Common myeloid progenitor, CD34-positive (primary cell): ENCODE measurements at regions of chr15 and their contacts with region 1.

Region 1: DNA sequence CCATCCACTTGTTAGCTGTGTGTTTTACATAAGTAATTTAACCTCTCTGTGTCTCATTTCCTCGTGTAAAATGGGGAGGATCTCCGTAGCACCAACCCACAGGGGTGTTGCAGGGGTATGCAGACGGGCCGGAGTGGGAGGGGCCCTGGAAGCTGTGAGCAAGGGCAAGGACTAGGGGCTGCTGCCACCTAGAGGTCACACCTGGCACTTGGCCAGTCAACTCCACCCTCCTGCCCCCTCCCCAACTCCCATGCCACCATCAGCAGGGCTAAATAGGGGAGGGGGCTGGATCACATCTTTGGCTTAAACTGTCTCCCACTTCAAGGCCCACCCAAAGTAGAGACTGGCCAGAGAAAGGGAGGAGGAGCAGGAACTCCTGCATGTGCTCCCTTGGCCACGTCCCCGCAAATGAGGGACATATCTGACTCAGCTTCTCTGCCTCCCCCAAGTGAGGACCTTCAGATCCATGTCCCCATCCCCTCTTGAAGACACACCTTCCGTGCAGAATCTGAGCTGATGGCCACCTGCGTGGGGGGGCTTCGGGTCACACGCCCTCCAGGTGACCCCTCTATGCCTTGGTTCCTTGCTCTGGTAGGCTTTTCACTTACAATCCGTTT is 2.6 kb downstream of the CCDC9B start:
- DNase-seq: peak; percentile 86 to 92 (median 92)
- H3K4me3 ChIP-seq: peak overlapping the region in 1 of 7 experiments; percentile 42
- H3K27ac ChIP-seq: no peak overlapping the region
- H3K4me1 ChIP-seq: peaks cover 5 to 71% (median 59%) of the 10 kb centered on the region in 4 experiments
- H3K27me3 ChIP-seq: no peaks in the 10 kb centered on the region

Region 2: GRCh38 chr15:39961051-39961450 is 377.1 kb before region 1 on chr15:
- CTCF ChIA-PET with region 1: no interaction called
- POLR2A ChIA-PET with region 1: no interaction called
- DNase-seq: no peak
- H3K4me3 ChIP-seq: no peak overlapping the region
- H3K27ac ChIP-seq: no peak overlapping the region
- H3K4me1 ChIP-seq: peaks cover 0 to 4% (median 1%) of the 10 kb centered on the region in 4 experiments
- H3K27me3 ChIP-seq: no peaks in the 10 kb centered on the region

Region 3: DNA sequence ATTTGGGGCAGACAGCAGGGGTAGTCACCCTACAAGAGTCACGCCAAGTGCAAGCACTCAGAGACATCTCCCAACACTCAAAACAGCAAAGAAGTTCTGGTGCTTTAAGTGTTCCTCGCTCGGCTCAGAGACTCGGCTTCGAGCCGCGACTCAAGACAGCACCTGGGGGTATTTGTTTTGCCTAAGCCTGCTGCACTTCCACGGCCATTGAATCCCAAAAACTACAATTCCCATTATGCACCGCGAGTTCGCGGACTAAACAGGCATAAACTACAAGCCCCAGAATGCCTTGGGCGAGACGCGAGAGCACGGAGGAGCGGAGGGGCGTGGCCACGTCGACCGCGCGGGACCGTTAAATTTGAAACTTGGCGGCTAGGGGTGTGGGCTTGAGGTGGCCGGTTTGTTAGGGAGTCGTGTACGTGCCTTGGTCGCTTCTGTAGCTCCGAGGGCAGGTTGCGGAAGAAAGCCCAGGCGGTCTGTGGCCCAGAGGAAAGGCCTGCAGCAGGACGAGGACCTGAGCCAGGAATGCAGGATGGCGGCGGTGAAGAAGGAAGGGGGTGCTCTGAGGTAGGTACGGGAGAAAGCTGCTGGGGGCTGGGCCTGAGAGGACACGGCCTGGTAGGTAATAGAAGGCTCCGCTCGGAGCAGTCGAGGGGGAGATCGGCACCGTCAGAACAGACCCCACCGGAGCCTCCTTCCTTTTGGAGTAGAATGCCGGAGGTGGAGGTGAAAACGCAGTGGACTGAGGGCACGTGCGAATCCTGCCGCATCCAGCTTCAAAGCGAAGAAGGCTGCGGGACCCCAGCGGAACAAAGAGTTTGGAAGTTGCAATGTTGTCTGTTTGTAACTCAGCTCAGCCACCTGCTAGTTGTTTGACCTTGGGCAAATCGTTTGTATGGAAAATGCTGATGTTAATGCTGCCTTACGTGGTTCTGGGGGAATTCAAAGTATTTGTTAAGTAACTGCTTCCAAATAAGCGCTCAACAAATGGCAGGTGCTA is 177.2 kb before region 1 on chr15 and contains the start of gene BUB1B:
- CTCF ChIA-PET with region 1: no interaction called
- POLR2A ChIA-PET with region 1: no interaction called
- DNase-seq: peak; percentile 91 to 96 (median 96)
- H3K4me3 ChIP-seq: peak within 1 kb of the TSS; percentile 93 to 99 (median 97)
- H3K27ac ChIP-seq: peak within 1 kb of the TSS in 1 of 2 experiments; percentile 62
- H3K4me1 ChIP-seq: peaks cover 8 to 27% (median 20%) of the 10 kb centered on the region in 4 experiments
- H3K27me3 ChIP-seq: no peaks in the 10 kb centered on the region

Region 4: GRCh38 chr15:40282144-40282868 is 55.8 kb before region 1 on chr15:
- CTCF ChIA-PET with region 1: interaction called, 236 read pairs
- POLR2A ChIA-PET with region 1: interaction called, 4 read pairs
- DNase-seq: peak; percentile 56 to 80 (median 72)
- H3K4me3 ChIP-seq: peak overlapping the region; percentile 20 to 78 (median 67)
- H3K27ac ChIP-seq: no peak overlapping the region
- H3K4me1 ChIP-seq: peaks cover 0 to 54% (median 38%) of the 10 kb centered on the region in 4 experiments
- H3K27me3 ChIP-seq: peaks cover 0 to 41% (median 0%) of the 10 kb centered on the region in 5 experiments

Region 5: GRCh38 chr15:40290918-40291574 is 47.1 kb before region 1 on chr15:
- CTCF ChIA-PET with region 1: interaction called, 58 read pairs
- POLR2A ChIA-PET with region 1: no interaction called
- DNase-seq: no peak
- H3K4me3 ChIP-seq: no peak overlapping the region
- H3K27ac ChIP-seq: no peak overlapping the region
- H3K4me1 ChIP-seq: peaks cover 0 to 18% (median 0%) of the 10 kb centered on the region in 4 experiments
- H3K27me3 ChIP-seq: no peaks in the 10 kb centered on the region

Region 6: DNA sequence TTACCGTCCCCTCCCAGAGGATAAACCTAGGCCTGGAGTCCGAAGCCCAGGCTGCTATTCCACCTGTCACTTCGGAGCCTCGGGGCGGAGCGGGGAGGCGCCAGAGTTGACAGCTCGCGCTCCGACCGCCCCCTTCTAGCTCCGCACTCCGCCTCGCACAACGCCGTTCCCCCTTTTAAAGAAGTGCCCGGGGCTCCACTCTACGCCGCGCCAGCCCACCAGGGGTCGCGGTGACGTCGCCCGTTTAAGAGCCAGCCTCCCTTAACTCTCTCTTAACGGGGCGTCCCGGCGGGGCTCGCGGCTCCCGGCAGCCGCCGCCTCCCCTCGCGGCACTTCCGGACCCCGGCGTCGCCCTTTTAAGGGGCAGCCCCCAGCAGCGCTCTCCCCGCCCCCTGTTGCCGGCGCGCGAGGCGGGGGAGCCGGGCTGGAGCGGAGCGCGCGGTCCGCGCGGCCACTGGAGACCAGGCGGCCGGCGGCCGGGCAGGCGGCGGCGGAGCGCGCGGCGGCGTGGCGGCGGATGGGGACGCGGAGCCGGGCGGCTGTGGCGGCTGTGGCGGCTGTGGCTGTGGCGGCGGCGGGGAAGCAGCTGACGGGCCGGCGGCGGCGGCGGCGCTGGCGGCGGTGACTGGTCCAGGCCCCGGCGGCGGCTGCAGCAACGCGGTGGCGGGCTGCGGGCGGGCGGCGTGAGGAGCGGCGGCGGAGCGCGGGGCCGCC is 14.8 kb before region 1 on chr15 and contains the start of gene INAFM2:
- CTCF ChIA-PET with region 1: interaction called, 1,099 read pairs
- POLR2A ChIA-PET with region 1: interaction called, 33 read pairs
- DNase-seq: peak; percentile 96 to 98 (median 98)
- H3K4me3 ChIP-seq: peak within 1 kb of the TSS; percentile 41 to 84 (median 81)
- H3K27ac ChIP-seq: peak within 1 kb of the TSS in 1 of 2 experiments; percentile 59
- H3K4me1 ChIP-seq: peaks cover 32 to 64% (median 59%) of the 10 kb centered on the region in 4 experiments
- H3K27me3 ChIP-seq: no peaks in the 10 kb centered on the region

Region 7: GRCh38 chr15:40357723-40358470 is 19.7 kb after region 1 on chr15 and contains the start of gene DISP2:
- CTCF ChIA-PET with region 1: interaction called, 139 read pairs
- POLR2A ChIA-PET with region 1: no interaction called
- DNase-seq: peak; percentile 66 to 81 (median 80)
- H3K4me3 ChIP-seq: peak within 1 kb of the TSS; percentile 23 to 78 (median 62)
- H3K27ac ChIP-seq: no peak within 1 kb of the TSS
- H3K4me1 ChIP-seq: peaks cover 0 to 22% (median 17%) of the 10 kb centered on the region in 4 experiments
- H3K27me3 ChIP-seq: peaks cover 0 to 2% (median 0%) of the 10 kb centered on the region in 5 experiments

Region 8: DNA sequence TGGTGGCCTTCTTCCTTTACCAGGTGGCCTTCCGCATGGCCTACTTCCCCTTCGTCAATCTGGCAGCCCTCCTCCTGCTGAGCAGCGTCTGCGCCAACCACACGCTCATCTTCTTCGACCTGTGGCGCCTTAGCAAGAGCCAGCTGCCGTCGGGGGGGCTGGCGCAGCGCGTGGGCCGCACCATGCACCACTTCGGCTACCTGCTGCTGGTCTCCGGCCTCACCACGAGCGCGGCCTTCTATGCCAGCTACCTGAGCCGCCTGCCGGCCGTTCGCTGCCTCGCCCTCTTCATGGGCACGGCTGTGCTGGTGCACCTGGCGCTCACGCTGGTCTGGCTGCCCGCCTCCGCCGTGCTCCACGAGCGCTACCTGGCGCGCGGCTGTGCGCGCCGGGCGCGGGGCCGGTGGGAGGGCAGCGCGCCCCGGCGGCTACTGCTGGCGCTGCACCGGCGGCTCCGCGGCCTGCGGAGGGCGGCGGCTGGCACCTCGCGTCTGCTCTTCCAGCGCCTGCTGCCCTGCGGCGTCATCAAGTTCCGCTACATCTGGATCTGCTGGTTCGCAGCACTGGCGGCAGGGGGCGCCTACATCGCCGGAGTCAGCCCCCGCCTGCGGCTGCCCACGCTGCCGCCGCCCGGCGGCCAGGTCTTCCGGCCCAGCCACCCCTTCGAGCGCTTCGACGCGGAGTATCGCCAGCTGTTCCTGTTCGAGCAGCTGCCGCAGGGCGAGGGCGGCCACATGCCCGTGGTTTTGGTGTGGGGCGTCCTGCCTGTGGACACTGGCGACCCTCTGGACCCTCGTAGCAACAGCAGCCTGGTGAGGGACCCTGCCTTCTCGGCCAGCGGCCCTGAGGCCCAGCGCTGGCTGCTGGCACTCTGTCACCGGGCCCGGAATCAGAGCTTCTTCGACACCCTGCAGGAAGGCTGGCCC is 29.8 kb after region 1 on chr15:
- CTCF ChIA-PET with region 1: interaction called, 112 read pairs
- POLR2A ChIA-PET with region 1: no interaction called
- DNase-seq: peak; percentile 93 to 98 (median 97)
- H3K4me3 ChIP-seq: peak overlapping the region; percentile 30 to 71 (median 46)
- H3K27ac ChIP-seq: no peak overlapping the region
- H3K4me1 ChIP-seq: peaks cover 4 to 20% (median 18%) of the 10 kb centered on the region in 4 experiments
- H3K27me3 ChIP-seq: no peaks in the 10 kb centered on the region

Region 9: DNA sequence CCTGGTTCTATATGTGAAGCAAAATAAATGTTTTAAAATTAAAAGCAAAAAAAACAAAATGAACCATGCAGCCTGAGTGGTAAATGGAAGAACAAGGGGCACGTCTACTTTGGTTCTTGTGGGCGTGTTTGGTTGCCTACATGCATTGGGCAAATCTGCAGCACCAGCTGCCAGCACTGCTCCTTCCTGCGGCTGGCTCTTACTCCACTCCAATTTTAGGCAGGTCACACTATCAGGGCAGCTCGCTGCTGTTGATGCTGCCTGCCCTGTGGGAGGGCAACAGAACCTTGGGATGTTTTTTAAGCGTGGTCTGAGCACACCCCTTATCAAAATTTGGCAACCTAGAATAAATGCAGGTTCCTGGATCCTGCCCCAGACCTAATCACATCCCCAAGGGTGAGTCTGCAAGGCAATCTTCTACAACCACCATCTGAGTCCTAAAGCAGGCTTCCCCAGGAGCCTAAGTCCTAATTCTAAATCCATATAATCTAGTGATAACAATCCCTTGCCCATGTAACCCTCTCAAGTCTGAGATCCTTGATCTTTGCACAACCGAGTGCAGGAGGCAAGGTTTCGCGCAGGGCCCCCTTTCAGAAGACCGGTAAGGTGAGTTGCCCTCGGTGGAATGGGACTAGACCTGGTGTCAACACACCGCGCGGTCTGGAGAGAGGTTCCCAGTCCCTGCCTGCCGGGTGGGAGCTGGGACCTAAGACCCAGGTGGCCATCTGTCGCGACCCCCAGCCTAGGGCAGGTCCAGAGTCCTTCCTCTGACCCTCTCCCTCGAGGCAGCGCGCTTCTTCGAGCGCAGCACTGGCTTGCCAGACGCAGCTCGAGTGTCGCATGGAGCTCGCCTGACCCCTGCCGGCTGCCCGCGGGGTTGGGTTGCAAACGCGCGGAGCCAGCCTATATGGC is 83.4 kb after region 1 on chr15:
- CTCF ChIA-PET with region 1: interaction called, 216 read pairs
- POLR2A ChIA-PET with region 1: no interaction called
- DNase-seq: peak; percentile 65 to 81 (median 80)
- H3K4me3 ChIP-seq: peak overlapping the region in 1 of 7 experiments; percentile 50
- H3K27ac ChIP-seq: no peak overlapping the region
- H3K4me1 ChIP-seq: peaks cover 0 to 10% (median 5%) of the 10 kb centered on the region in 4 experiments
- H3K27me3 ChIP-seq: no peaks in the 10 kb centered on the region